ENCODE measurements at regions of chr6 and their contacts with region 1.

Region 1: GRCh38 chr6:24991810-24992467 is 56.2 kb upstream of the RIPOR2 start:
- DNase-seq: peak; percentile 86
- ATAC-seq: peak; percentile 95
- H3K4me3 Mint-ChIP-seq: no peak overlapping the region
- H3K27ac Mint-ChIP-seq: peak overlapping the region; percentile 75
- H3K4me1 Mint-ChIP-seq: peaks cover 46% of the 10 kb centered on the region
- H3K27me3 Mint-ChIP-seq: no peaks in the 10 kb centered on the region

Region 2: GRCh38 chr6:24855395-24856245 is 136.3 kb before region 1 on chr6:
- CTCF ChIA-PET with region 1: interaction called, 129 read pairs
- POLR2A ChIA-PET with region 1: interaction called, 8 read pairs
- DNase-seq: peak; percentile 84
- ATAC-seq: peak; percentile 49
- H3K4me3 Mint-ChIP-seq: no peak overlapping the region
- H3K27ac Mint-ChIP-seq: peak overlapping the region; percentile 64
- H3K4me1 Mint-ChIP-seq: peaks cover 52% of the 10 kb centered on the region
- H3K27me3 Mint-ChIP-seq: no peaks in the 10 kb centered on the region

Region 3: DNA sequence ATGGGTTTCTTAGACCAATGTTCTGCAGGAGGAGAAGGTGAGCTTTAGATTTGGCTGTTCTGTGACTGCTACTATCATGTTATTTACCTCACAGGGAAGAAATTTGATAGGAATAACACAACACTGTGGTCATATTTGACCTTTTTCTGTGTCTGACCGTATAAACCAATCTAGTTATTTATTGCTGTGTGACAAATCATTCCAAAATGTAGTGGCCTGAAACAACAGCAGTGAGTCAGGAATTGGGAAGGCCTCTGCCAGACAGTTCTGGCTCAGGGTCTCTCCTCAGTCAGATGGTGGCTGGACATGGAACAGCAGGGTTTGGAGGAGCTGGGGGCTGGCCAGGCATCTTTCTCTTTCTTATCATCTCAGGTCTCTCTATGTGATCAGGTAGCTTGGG is 89.2 kb before region 1 on chr6:
- CTCF ChIA-PET with region 1: interaction called, 88 read pairs
- POLR2A ChIA-PET with region 1: interaction called, 4 read pairs
- DNase-seq: no peak
- ATAC-seq: no peak
- H3K4me3 Mint-ChIP-seq: no peak overlapping the region
- H3K27ac Mint-ChIP-seq: peak overlapping the region; percentile 50
- H3K4me1 Mint-ChIP-seq: peaks cover 87% of the 10 kb centered on the region
- H3K27me3 Mint-ChIP-seq: no peaks in the 10 kb centered on the region

Region 4: GRCh38 chr6:24943774-24944173 is 48.2 kb before region 1 on chr6:
- CTCF ChIA-PET with region 1: interaction called, 433 read pairs
- POLR2A ChIA-PET with region 1: interaction called, 8 read pairs
- DNase-seq: no peak
- ATAC-seq: no peak
- H3K4me3 Mint-ChIP-seq: no peak overlapping the region
- H3K27ac Mint-ChIP-seq: no peak overlapping the region
- H3K4me1 Mint-ChIP-seq: peaks cover 59% of the 10 kb centered on the region
- H3K27me3 Mint-ChIP-seq: no peaks in the 10 kb centered on the region

Region 5: GRCh38 chr6:24968786-24969185 is 23.2 kb before region 1 on chr6:
- CTCF ChIA-PET with region 1: interaction called, 44 read pairs
- POLR2A ChIA-PET with region 1: no interaction called
- DNase-seq: no peak
- ATAC-seq: no peak
- H3K4me3 Mint-ChIP-seq: no peak overlapping the region
- H3K27ac Mint-ChIP-seq: no peak overlapping the region
- H3K4me1 Mint-ChIP-seq: peaks cover 21% of the 10 kb centered on the region
- H3K27me3 Mint-ChIP-seq: no peaks in the 10 kb centered on the region

Region 6: DNA sequence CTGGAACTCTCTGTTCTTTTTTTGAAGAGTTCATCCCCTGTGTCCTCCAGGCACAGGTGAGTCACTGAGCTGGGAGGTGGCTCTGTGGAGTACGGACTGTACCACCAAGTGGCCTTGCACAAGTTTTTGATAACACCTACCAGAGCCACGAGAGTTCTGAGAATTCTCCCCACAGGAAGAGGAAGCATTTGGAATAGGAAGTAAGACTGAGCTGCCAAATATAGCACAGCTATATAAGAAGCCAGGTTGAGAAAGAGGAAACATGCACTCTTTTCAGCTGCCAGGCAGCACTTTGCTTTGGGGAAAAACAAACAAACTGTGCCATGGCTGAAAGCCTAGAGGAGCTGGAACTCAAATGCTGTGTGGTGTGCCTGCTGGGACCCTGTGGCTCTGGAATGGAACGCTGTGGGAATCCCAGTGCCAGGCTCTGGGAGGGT is 14.6 kb after region 1 on chr6:
- CTCF ChIA-PET with region 1: interaction called, 57 read pairs
- POLR2A ChIA-PET with region 1: interaction called, 7 read pairs
- DNase-seq: peak; percentile 76
- ATAC-seq: peak; percentile 84
- H3K4me3 Mint-ChIP-seq: peak overlapping the region; percentile 58
- H3K27ac Mint-ChIP-seq: peak overlapping the region; percentile 92
- H3K4me1 Mint-ChIP-seq: peaks cover 82% of the 10 kb centered on the region
- H3K27me3 Mint-ChIP-seq: no peaks in the 10 kb centered on the region

Region 7: GRCh38 chr6:25042036-25042521 is 50.1 kb after region 1 on chr6:
- CTCF ChIA-PET with region 1: interaction called, 16 read pairs
- POLR2A ChIA-PET with region 1: interaction called, 3 read pairs
- DNase-seq: peak; percentile 62
- ATAC-seq: peak; percentile 72
- H3K4me3 Mint-ChIP-seq: peak overlapping the region; percentile 92
- H3K27ac Mint-ChIP-seq: peak overlapping the region; percentile 94
- H3K4me1 Mint-ChIP-seq: peaks cover 60% of the 10 kb centered on the region
- H3K27me3 Mint-ChIP-seq: peaks cover 5% of the 10 kb centered on the region

Region 8: DNA sequence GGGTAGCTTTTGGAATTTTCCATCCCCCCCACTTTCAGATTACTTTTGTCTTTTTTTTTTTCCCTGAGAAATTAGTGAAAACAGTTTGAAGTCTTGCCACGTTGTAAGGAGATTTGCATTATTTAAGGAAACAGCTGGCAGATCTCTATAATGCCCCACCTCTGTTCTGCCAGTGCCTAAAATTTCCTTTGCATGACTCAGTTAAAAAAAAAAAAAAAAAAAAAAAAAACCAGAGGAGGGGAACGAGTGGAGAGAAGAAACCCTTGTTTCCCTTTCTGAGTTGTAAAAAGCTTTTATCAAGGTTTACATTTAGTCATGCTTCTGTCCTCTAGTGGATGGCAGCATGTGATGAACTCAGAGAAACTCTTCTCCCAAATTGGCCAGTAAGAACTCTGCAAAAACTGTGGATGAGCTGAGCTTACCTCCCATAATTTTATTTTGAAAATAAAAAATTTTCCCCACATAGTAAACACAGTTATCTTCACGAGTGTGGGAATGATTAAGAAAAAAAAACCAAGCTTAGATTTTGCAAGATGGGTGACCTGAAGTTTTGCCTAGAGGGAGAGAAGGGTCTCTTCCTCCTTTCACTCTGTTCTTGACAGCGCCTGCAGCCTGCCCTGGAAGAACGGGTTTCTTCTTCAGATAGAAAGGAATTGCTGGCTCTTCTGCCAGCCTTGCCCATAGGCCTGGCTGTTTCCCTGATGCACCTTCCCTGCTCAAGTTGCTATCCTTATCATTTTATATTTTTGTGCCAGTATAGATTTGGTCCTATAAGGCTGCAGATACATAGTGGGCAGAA is 321.0 kb after region 1 on chr6:
- CTCF ChIA-PET with region 1: no interaction called
- POLR2A ChIA-PET with region 1: no interaction called
- DNase-seq: no peak
- ATAC-seq: no peak
- H3K4me3 Mint-ChIP-seq: no peak overlapping the region
- H3K27ac Mint-ChIP-seq: no peak overlapping the region
- H3K4me1 Mint-ChIP-seq: peaks cover 12% of the 10 kb centered on the region
- H3K27me3 Mint-ChIP-seq: no peaks in the 10 kb centered on the region

Measured in activated CD8-positive, alpha-beta T cell treated with anti-CD3 and anti-CD28 coated beads, Interleukin-2, amount 10 ng/mL, durations not matched to agents 7 days and 5 days (primary cell).